Prostate gland (tissue), 2 donors: ENCODE measurements at regions of chr1 and their contacts with region 1.

Region 1: GRCh38 chr1:214660862-214661261 is 57.9 kb downstream of the CENPF start:
- DNase-seq: no peak
- H3K4me3 ChIP-seq: no peak overlapping the region
- H3K27ac ChIP-seq: no peak overlapping the region
- H3K4me1 ChIP-seq: no peaks in the 10 kb centered on the region
- H3K27me3 ChIP-seq: no peaks in the 10 kb centered on the region
- CTCF ChIP-seq: peak in 2 of 4 experiments; percentile 17 to 25
- POLR2A ChIP-seq: no peak

Region 2: GRCh38 chr1:214446772-214447556 is 213.9 kb before region 1 on chr1:
- intact Hi-C with region 1: no loop called
- DNase-seq: peak; percentile 33
- H3K4me3 ChIP-seq: no peak overlapping the region
- H3K27ac ChIP-seq: no peak overlapping the region
- H3K4me1 ChIP-seq: no peaks in the 10 kb centered on the region
- H3K27me3 ChIP-seq: no peaks in the 10 kb centered on the region
- CTCF ChIP-seq: no peak
- POLR2A ChIP-seq: no peak

Region 3: GRCh38 chr1:215146341-215146826 is 485.5 kb after region 1 on chr1:
- intact Hi-C with region 1: loop called (anchors 5 kb)
- DNase-seq: no peak
- H3K4me3 ChIP-seq: no peak overlapping the region
- H3K27ac ChIP-seq: no peak overlapping the region
- H3K4me1 ChIP-seq: no peaks in the 10 kb centered on the region
- H3K27me3 ChIP-seq: no peaks in the 10 kb centered on the region
- CTCF ChIP-seq: peak in 1 of 4 experiments; percentile 31
- POLR2A ChIP-seq: no peak

Region 4: DNA sequence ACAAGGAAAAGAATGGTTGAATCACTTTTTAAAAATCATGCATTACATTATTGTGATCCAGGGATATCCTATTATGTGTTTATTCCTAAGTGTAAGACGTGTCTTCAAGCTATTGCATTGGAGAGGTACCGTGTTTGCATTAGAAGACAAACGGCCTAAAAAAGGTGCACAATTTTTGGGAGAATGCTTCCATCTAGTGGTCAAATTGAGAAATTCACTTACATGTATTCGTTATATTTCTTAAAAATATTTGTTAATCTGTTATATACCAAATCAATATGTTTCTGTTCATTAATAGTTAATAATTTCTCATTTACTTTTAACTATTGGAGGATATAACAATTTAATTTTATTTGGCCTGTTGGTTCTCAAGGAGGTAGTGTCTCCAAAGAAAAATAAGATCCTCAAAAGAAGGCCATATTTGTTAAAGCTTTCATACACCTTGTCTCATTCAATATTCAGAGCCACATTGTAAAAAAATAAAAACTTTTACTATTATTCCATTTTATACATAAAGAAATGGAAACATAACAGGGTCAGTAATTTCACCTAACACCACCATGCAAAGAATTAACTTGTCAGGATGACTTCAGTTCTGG is 865.8 kb after region 1 on chr1:
- intact Hi-C with region 1: loop called (anchors 2 kb)
- DNase-seq: no peak
- H3K4me3 ChIP-seq: no peak overlapping the region
- H3K27ac ChIP-seq: no peak overlapping the region
- H3K4me1 ChIP-seq: no peaks in the 10 kb centered on the region
- H3K27me3 ChIP-seq: no peaks in the 10 kb centered on the region
- CTCF ChIP-seq: peak; percentile 44 to 86 (median 80)
- POLR2A ChIP-seq: no peak